ENCODE measurements at regions of chr12 and their contacts with region 1.

Region 1: GRCh38 chr12:56688129-56688845 is at the start of gene PTGES3:
- DNase-seq: peak; percentile 99
- H3K4me3 Mint-ChIP-seq: peak within 1 kb of the TSS; percentile 90
- H3K27ac Mint-ChIP-seq: peak within 1 kb of the TSS; percentile 99
- H3K4me1 Mint-ChIP-seq: peaks cover 19% of the 10 kb centered on the region
- H3K27me3 Mint-ChIP-seq: no peaks in the 10 kb centered on the region
- total RNA-seq, gene PTGES3: 289 to 293 TPM

Region 2: DNA sequence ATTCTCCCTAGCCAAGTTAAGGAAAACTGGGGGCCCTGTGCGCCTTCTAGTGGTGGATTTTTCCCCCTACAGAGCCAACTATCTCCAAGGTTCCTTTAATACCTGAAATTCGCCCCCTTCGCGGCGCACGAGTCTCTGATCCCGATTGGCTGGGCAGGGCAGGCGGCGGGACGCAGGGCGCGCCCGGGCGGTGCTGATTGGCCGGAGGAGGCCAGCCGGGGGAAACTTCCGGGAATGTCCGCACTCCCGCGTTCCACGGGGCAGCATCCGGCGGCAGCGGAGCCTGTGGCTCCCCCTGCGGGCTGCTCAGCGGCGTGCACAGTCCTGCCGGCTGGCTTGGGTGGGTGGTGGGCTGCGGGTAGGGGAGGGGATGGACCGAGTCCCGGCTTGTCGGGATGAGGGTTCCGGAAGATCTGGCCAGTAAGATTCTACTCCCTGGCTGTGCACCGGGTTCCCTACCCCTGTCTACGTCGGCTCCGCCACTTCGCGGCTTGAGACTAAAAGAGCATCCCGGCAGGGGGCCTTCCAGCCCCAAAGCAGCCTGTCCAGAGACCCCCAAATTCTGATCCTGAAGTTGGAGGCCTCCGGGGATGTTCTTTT is 464.1 kb before region 1 on chr12 and contains the start of gene NABP2:
- CTCF ChIA-PET with region 1: no interaction called
- intact Hi-C with region 1: loop called (anchors 5 kb)
- DNase-seq: peak; percentile 97
- H3K4me3 Mint-ChIP-seq: peak within 1 kb of the TSS; percentile 99
- H3K27ac Mint-ChIP-seq: peak within 1 kb of the TSS; percentile 93
- H3K4me1 Mint-ChIP-seq: peaks cover 37% of the 10 kb centered on the region
- H3K27me3 Mint-ChIP-seq: no peaks in the 10 kb centered on the region
- total RNA-seq, gene NABP2: 57.4 to 59.0 TPM

Region 3: DNA sequence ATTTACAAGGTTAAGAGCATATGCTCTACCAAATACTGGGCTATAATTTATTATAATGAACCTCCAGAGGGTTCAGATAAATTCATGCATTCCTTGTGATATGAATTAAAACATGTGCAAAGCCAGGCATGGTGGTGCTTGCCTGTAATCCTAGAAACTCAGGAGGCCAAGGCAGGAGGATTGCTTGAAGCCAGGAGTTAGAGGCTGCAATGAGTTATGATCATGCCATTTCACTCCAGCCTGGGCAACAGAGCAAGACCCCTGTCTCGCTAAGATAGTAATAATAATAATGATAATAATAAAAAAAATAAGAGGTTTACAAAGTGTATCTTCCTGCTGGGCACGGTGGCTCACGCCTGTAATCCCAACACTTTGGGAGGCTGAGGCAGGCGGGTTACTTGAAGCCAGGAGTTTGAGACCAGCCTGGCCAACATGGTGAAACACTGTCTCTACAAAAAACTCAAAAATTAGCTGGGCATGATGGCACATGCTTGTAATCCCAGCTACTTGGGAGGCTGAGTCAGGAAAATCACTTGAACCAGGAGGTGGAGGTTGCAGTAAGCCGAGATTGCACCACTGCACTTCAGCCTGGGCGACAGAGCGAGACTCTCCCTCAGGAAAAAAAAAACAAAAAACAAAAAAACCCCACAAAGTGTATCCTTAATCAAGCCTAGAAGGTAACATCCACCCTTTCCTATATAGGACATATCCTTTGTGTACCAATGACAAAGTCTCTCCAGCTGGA is 380.9 kb before region 1 on chr12:
- CTCF ChIA-PET with region 1: no interaction called
- intact Hi-C with region 1: no loop called
- DNase-seq: no peak
- H3K4me3 Mint-ChIP-seq: no peak overlapping the region
- H3K27ac Mint-ChIP-seq: no peak overlapping the region
- H3K4me1 Mint-ChIP-seq: peaks cover 3% of the 10 kb centered on the region
- H3K27me3 Mint-ChIP-seq: no peaks in the 10 kb centered on the region

Region 4: DNA sequence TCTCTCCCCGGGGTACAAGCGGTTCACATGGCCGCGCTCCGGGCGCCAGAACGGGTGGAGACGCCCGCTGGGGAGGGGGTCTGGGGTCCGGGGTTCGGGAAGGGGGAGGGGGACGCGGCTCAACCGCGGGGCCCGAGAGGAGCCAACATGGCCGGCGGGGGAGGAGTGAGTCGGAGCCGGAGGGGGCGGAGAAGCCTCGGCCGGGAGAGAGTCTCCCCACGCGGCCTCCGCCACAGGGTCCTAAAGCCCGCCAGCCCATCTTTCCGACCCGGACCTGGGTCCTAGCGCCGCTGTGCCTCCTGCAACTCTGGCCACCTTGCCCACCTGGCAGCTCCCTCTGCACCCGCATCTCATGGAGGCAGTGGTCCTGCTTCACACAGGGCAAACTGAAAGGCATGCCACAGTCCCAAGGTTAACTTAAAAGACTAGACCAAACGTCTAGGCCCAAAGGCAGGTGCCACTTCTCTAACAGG is 58.1 kb before region 1 on chr12 and contains the start of gene BAZ2A:
- CTCF ChIA-PET with region 1: no interaction called
- intact Hi-C with region 1: loop called (anchors 1 kb)
- DNase-seq: peak; percentile 93
- H3K4me3 Mint-ChIP-seq: peak within 1 kb of the TSS; percentile 98
- H3K27ac Mint-ChIP-seq: peak within 1 kb of the TSS; percentile 94
- H3K4me1 Mint-ChIP-seq: peaks cover 79% of the 10 kb centered on the region
- H3K27me3 Mint-ChIP-seq: no peaks in the 10 kb centered on the region
- total RNA-seq, gene BAZ2A: 78.3 to 80.0 TPM

Region 5: GRCh38 chr12:56657416-56658379 is 30.6 kb before region 1 on chr12:
- CTCF ChIA-PET with region 1: no interaction called
- intact Hi-C with region 1: no loop called
- DNase-seq: no peak
- H3K4me3 Mint-ChIP-seq: no peak overlapping the region
- H3K27ac Mint-ChIP-seq: peak overlapping the region; percentile 73
- H3K4me1 Mint-ChIP-seq: peaks cover 18% of the 10 kb centered on the region
- H3K27me3 Mint-ChIP-seq: no peaks in the 10 kb centered on the region

Region 6: DNA sequence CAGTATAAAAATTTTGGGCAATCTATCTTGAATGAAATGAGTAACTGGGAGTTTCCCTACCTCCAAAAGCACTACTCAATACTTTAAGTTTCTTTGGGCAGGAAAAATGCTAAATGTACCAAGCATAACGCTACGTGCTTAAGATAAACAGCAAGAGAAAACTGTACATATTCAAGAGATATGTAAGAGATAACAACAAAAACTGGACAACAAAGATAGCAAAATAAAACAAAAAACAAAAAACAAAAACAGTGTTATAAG is 20.2 kb before region 1 on chr12:
- CTCF ChIA-PET with region 1: no interaction called
- intact Hi-C with region 1: loop called (anchors 1 kb)
- DNase-seq: no peak
- H3K4me3 Mint-ChIP-seq: no peak overlapping the region
- H3K27ac Mint-ChIP-seq: peak overlapping the region; percentile 71
- H3K4me1 Mint-ChIP-seq: peaks cover 49% of the 10 kb centered on the region
- H3K27me3 Mint-ChIP-seq: no peaks in the 10 kb centered on the region

Region 7: DNA sequence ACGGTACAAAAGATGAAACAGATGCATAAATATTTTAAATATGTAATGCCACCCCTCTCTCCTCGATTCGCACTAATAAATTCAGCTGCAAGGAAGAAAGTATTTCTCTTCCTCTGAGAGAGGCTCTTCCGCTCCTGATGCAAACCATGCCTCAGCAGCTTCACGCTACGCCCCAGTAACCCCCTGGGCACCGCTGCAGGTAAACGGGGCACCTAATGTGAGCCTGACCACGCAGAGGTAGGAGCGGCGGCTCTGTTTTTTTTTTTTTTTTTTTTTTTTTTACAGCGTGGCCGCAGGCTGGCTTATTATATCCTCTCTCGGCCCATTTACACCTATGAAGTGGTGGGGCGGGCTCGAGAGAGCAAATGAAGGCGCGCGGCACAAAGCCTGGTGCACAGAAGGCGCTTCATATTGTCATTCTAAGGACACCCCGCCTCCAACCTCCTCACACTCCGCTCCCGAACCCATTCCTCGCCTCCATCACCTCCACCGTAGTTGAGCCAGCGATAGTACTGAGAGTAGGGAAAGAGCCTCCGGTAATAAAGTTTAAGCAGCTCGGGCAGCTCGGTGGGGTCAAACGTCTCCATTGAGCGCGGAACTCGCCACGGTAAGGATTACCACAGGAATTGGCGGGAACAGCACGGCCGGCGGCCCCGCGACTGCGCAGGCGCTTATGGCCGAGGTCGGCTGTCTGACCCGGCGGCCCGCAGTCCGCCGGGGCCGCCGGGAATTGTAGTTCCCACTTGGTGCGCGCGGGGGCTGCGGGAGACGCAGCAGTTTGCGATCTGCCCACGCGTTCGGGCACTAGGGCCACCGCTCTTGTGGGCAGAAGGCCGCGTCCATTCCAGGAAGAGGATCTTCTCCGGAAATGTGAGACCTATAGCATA is 63.7 kb after region 1 on chr12 and contains the start of gene PRIM1:
- CTCF ChIA-PET with region 1: no interaction called
- intact Hi-C with region 1: loop called (anchors 1 kb)
- DNase-seq: peak; percentile 90
- H3K4me3 Mint-ChIP-seq: peak within 1 kb of the TSS; percentile 98
- H3K27ac Mint-ChIP-seq: peak within 1 kb of the TSS; percentile 99
- H3K4me1 Mint-ChIP-seq: peaks cover 40% of the 10 kb centered on the region
- H3K27me3 Mint-ChIP-seq: no peaks in the 10 kb centered on the region
- total RNA-seq, gene PRIM1: 74.9 to 75.0 TPM

Region 8: DNA sequence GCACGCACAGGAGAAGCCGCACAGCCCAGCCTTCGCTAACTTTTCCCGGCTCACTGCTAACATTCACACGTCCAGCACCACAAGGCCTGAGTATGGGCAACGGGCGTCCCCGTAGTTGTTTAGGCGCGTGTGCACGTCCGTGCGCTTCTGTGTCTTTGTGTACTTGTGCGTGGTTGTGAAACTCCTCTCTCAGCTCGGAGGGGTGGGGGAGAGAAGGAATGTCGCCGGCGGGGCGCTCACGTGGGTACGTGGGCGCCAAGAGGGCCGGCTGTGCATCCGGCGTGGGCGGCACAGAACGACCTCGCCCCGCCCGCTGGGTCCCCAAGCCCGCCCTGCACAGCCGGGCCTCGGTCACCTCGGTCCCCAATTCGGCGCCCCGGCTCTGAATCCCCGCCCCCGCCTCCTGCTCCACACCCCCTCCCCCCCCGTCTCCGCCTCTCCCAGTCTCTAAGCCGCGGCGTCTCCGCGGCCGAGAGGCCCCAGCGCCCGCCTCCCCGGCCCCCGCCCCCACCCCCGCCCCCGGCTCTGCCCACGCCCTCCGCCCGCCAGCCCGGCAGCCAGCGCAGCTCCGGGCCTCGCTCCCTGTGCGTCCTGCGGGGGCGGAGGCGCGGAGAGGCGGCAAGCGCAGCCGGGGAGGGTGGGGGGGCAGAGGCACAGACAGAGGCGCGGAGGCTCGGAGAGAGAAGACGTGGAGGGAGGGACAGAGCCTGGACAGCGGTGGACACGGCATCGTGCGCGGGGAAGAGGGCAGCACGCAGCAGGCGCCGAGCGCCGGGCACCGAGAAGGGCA is 400.4 kb after region 1 on chr12 and contains the start of gene NAB2:
- CTCF ChIA-PET with region 1: no interaction called
- intact Hi-C with region 1: loop called (anchors 1 kb)
- DNase-seq: peak; percentile 92
- H3K4me3 Mint-ChIP-seq: peak within 1 kb of the TSS; percentile 91
- H3K27ac Mint-ChIP-seq: peak within 1 kb of the TSS; percentile 99
- H3K4me1 Mint-ChIP-seq: peaks cover 61% of the 10 kb centered on the region
- H3K27me3 Mint-ChIP-seq: no peaks in the 10 kb centered on the region
- total RNA-seq, gene NAB2: 18.4 to 19.1 TPM

Region 9: GRCh38 chr12:57476162-57476992 is 788.1 kb after region 1 on chr12:
- CTCF ChIA-PET with region 1: no interaction called
- intact Hi-C with region 1: loop called (anchors 1 kb)
- DNase-seq: peak; percentile 94
- H3K4me3 Mint-ChIP-seq: peak overlapping the region; percentile 84
- H3K27ac Mint-ChIP-seq: peak overlapping the region; percentile 99
- H3K4me1 Mint-ChIP-seq: peaks cover 65% of the 10 kb centered on the region
- H3K27me3 Mint-ChIP-seq: no peaks in the 10 kb centered on the region

Measured in activated naive CD4-positive, alpha-beta T cell treated with anti-CD3 and anti-CD28 coated beads for 36 hours (primary cell).